Heart left ventricle (tissue), 16 donors: ENCODE measurements at regions of chr10 and their contacts with region 1.

Region 1: GRCh38 chr10:103859161-103860086 is 4.0 kb upstream of the SH3PXD2A start:
- DNase-seq: peak in 3 of 5 donors; percentile 47 to 67 (median 63)
- ATAC-seq: peak; percentile 57 to 75 (median 59)
- H3K4me3 ChIP-seq: no peak overlapping the region
- H3K27ac ChIP-seq: peak overlapping the region in 1 of 12 donors; percentile 10
- H3K4me1 ChIP-seq: peaks cover 0 to 29% (median 8%) of the 10 kb centered on the region in 12 donors
- H3K27me3 ChIP-seq: peaks cover 0 to 2% (median 0%) of the 10 kb centered on the region in 9 donors
- CTCF ChIP-seq: peak; percentile 57 to 85 (median 76)
- POLR2A ChIP-seq: no peak

Region 2: GRCh38 chr10:103592186-103593021 is 267.0 kb before region 1 on chr10:
- intact Hi-C with region 1: loop called in 2 of 10 experiments (anchors 5 to 10 kb)
- DNase-seq: no peak
- ATAC-seq: peak in 3 of 4 donors; percentile 42 to 53 (median 50)
- H3K4me3 ChIP-seq: no peak overlapping the region
- H3K27ac ChIP-seq: no peak overlapping the region
- H3K4me1 ChIP-seq: peaks cover 0 to 14% (median 2%) of the 10 kb centered on the region in 12 donors
- H3K27me3 ChIP-seq: no peaks in the 10 kb centered on the region
- CTCF ChIP-seq: peak; percentile 35 to 66 (median 54)
- POLR2A ChIP-seq: no peak

Region 3: GRCh38 chr10:103605359-103606095 is 253.9 kb before region 1 on chr10:
- intact Hi-C with region 1: loop called in 3 of 10 experiments (anchors 5 to 10 kb)
- DNase-seq: peak in 4 of 5 donors; percentile 46 to 60 (median 54)
- ATAC-seq: peak; percentile 24 to 66 (median 53)
- H3K4me3 ChIP-seq: no peak overlapping the region
- H3K27ac ChIP-seq: no peak overlapping the region
- H3K4me1 ChIP-seq: peaks cover 0 to 10% (median 2%) of the 10 kb centered on the region in 12 donors
- H3K27me3 ChIP-seq: no peaks in the 10 kb centered on the region
- CTCF ChIP-seq: peak; percentile 66 to 84 (median 78)
- POLR2A ChIP-seq: no peak

Region 4: GRCh38 chr10:103712570-103713498 is 146.6 kb before region 1 on chr10:
- intact Hi-C with region 1: loop called (anchors 1 to 2 kb)
- DNase-seq: peak; percentile 74 to 80 (median 75)
- ATAC-seq: peak; percentile 63 to 80 (median 79)
- H3K4me3 ChIP-seq: no peak overlapping the region
- H3K27ac ChIP-seq: no peak overlapping the region
- H3K4me1 ChIP-seq: peaks cover 0 to 24% (median 0%) of the 10 kb centered on the region in 12 donors
- H3K27me3 ChIP-seq: no peaks in the 10 kb centered on the region
- CTCF ChIP-seq: peak; percentile 78 to 93 (median 89)
- POLR2A ChIP-seq: no peak

Region 5: DNA sequence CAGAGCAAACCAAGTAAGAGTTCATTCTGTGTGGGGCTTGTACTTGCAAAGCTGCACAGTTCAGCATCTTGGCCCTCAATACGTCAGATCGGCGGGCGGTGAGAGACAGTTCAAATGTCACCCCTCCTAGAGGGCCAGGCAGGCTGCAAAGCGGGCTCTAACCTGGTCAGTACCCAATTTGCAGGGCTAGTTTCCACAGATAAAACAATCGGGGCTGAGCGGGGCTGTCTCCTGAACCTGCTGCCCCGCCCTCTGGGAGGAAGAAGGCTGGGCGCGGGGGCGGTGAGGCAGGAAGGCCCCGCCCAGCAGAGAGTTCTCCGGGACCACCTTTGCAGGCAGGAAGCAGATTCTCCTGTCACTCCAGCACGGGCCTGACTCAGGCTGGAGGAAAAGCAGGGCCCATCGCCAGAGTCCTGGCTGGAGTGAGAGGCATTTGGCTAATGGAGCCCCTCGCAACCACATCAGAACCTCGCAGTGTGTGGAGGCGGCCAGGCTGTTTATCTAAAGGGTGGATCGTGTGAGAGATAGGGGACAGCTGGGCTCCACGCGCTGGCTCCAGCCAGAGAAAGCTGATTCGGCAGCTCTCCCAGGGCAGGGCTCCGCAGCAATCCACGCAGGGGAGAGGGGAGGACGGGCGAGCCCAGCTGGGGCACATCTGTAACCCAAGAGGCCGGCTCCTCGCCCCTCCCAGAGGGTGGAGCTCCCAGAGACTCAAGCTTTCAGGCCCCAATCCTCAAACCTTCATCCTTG is 87.2 kb before region 1 on chr10:
- intact Hi-C with region 1: loop called in 5 of 10 experiments (anchors 5 to 10 kb)
- DNase-seq: peak; percentile 86 to 92 (median 89)
- ATAC-seq: peak; percentile 83 to 93 (median 90)
- H3K4me3 ChIP-seq: peak overlapping the region in 10 of 12 donors; percentile 22 to 59 (median 44)
- H3K27ac ChIP-seq: peak overlapping the region; percentile 56 to 89 (median 78)
- H3K4me1 ChIP-seq: peaks cover 0 to 40% (median 18%) of the 10 kb centered on the region in 12 donors
- H3K27me3 ChIP-seq: no peaks in the 10 kb centered on the region
- CTCF ChIP-seq: no peak
- POLR2A ChIP-seq: peak in 1 of 2 donors; percentile 23

Region 6: GRCh38 chr10:103820101-103821062 is 39.0 kb before region 1 on chr10:
- intact Hi-C with region 1: loop called in 1 of 10 experiments (anchors 2 kb)
- DNase-seq: peak; percentile 83 to 91 (median 86)
- ATAC-seq: peak; percentile 60 to 91 (median 81)
- H3K4me3 ChIP-seq: peak overlapping the region in 4 of 12 donors; percentile 2 to 26 (median 10)
- H3K27ac ChIP-seq: peak overlapping the region in 9 of 12 donors; percentile 2 to 60 (median 54)
- H3K4me1 ChIP-seq: peaks cover 0 to 68% (median 38%) of the 10 kb centered on the region in 12 donors
- H3K27me3 ChIP-seq: no peaks in the 10 kb centered on the region
- CTCF ChIP-seq: no peak
- POLR2A ChIP-seq: no peak

Region 7: GRCh38 chr10:103833731-103834365 is 25.6 kb before region 1 on chr10:
- intact Hi-C with region 1: no loop called
- DNase-seq: peak; percentile 75 to 89 (median 84)
- ATAC-seq: peak; percentile 46 to 71 (median 63)
- H3K4me3 ChIP-seq: no peak overlapping the region
- H3K27ac ChIP-seq: peak overlapping the region in 11 of 12 donors; percentile 50 to 85 (median 65)
- H3K4me1 ChIP-seq: peaks cover 9 to 69% (median 50%) of the 10 kb centered on the region in 12 donors
- H3K27me3 ChIP-seq: no peaks in the 10 kb centered on the region
- CTCF ChIP-seq: no peak
- POLR2A ChIP-seq: no peak

Region 8: GRCh38 chr10:103918053-103918846 is 58.8 kb after region 1 on chr10 and contains the start of gene STN1:
- intact Hi-C with region 1: no loop called
- DNase-seq: peak; percentile 98 to 99 (median 99)
- ATAC-seq: peak; percentile 98
- H3K4me3 ChIP-seq: peak within 1 kb of the TSS; percentile 27 to 97 (median 74)
- H3K27ac ChIP-seq: peak within 1 kb of the TSS; percentile 90 to 100 (median 96)
- H3K4me1 ChIP-seq: peaks cover 0 to 44% (median 29%) of the 10 kb centered on the region in 12 donors
- H3K27me3 ChIP-seq: no peaks in the 10 kb centered on the region
- CTCF ChIP-seq: peak in 4 of 12 donors; percentile 11 to 19 (median 14)
- POLR2A ChIP-seq: peak; percentile 85 to 97
- total RNA-seq, gene STN1: 28.6 to 53.1 (median 32.7) TPM

Region 9: DNA sequence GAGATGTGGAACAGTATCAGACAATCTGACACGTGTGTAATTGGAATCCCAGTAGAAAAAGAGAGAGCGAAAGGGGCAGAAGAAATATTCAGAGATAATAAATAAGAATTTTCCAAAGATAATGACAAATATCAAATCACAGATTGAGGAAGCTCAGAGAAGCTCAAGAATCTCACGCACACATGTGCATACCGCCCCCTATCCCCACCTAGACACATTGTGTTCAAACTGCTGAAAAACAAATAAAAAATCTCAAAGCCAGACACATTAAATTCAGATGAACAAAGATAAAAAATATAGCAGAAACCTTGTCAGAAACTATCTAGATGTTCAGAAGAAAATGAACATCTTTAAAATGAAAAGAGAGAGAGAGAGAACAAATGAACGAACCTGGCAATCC is 279.8 kb after region 1 on chr10:
- intact Hi-C with region 1: no loop called
- DNase-seq: no peak
- ATAC-seq: no peak
- H3K4me3 ChIP-seq: no peak overlapping the region
- H3K27ac ChIP-seq: no peak overlapping the region
- H3K4me1 ChIP-seq: no peaks in the 10 kb centered on the region
- H3K27me3 ChIP-seq: peaks cover 0 to 2% (median 0%) of the 10 kb centered on the region in 9 donors
- CTCF ChIP-seq: peak in 4 of 12 donors; percentile 12 to 37 (median 14)
- POLR2A ChIP-seq: no peak